ENCODE measurements at regions of chr19 and their contacts with region 1.

Region 1: DNA sequence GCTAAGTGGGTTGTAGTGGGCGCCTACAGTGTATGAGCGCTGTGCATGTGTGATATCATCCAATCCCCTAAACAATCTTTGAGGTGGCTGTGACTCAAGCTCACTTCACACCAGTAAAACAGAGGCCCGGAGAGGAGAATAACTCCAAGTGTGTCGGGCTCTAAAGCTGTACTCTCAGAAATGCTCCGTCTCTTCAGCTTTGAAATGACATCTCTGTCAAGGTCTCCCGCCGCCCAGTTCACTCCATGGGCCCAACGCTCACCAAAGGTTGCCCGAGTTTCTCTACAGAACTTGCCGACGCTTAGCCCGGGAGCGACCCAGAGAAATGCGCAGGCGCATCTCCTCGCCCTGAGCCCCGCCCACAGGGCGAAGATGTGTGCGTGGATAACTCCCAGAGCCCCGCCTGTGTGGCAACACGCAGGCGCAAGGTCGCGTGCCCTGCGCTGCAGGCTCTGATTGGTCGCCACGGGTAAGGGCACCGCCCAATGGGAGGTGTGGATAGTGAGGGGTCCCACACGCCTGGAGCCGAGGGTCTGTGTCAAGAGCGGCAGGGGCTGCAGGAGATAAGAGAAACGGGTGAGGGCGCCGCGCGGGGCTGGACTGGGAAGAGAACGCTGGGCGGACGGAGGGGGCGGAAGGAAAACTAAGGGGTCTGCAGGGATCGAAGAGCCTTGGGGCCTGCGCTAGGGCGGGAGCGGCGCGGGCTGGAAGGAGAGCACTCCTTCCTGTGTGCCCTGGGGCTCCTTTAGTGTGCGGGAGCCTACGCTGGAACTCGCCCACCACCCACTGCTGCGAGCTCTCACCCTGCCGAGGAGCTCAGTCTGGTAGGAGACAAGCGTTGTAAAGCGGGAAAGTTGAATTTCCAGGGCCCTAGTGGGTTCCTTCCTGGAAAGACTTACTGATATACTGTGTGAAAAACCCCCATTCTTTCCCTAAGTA is at the start of gene ZNF526:
- DNase-seq: peak; percentile 96
- H3K4me3 ChIP-seq: peak within 1 kb of the TSS; percentile 80 to 95 (median 85)
- H3K27ac ChIP-seq: peak within 1 kb of the TSS; percentile 65
- H3K4me1 ChIP-seq: peaks cover 27% of the 10 kb centered on the region
- H3K27me3 ChIP-seq: no peaks in the 10 kb centered on the region
- CTCF ChIP-seq: no peak
- total RNA-seq, gene ZNF526: 11.2 to 15.8 TPM

Region 2: GRCh38 chr19:42132851-42133528 is 87.1 kb before region 1 on chr19:
- CTCF ChIA-PET with region 1: no interaction called
- dilution Hi-C with region 1: no loop called
- in situ Hi-C with region 1: no loop called
- intact Hi-C with region 1: no loop called
- DNase-seq: peak; percentile 41
- H3K4me3 ChIP-seq: peak overlapping the region in 1 of 3 experiments; percentile 38
- H3K27ac ChIP-seq: no peak overlapping the region
- H3K4me1 ChIP-seq: peaks cover 33% of the 10 kb centered on the region
- H3K27me3 ChIP-seq: no peaks in the 10 kb centered on the region
- CTCF ChIP-seq: peak; percentile 55 to 94

Region 3: GRCh38 chr19:42199440-42200115 is 20.5 kb before region 1 on chr19:
- CTCF ChIA-PET with region 1: no interaction called
- dilution Hi-C with region 1: no loop called
- in situ Hi-C with region 1: no loop called
- intact Hi-C with region 1: loop called (anchors 2 kb)
- DNase-seq: peak; percentile 80
- H3K4me3 ChIP-seq: no peak overlapping the region
- H3K27ac ChIP-seq: peak overlapping the region; percentile 28
- H3K4me1 ChIP-seq: peaks cover 29% of the 10 kb centered on the region
- H3K27me3 ChIP-seq: no peaks in the 10 kb centered on the region
- CTCF ChIP-seq: peak; percentile 49 to 67

Region 4: DNA sequence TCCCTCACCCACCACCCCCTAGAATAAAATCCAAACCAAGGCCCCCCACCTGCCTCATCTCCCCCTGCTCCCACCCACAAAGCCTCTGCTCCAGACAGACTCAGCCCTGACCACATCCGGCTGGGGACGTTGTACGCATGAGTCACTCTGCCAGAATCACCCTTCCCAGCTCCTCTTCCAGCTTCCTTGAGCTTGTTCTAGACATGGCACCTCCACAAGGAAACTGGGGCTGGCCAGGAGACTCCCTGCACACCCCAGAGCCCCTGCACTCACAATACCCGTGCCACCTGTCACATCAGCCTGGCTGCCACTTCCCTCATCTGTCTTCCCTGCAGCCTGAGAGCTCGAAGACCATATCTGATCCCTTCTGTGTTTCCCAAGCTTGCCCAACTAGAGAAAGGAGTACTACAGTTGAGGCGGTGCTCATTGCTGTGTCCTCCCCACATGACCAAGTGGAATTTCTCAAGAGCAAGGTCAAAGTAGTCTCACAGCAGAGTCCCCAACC is 12.3 kb before region 1 on chr19:
- CTCF ChIA-PET with region 1: no interaction called
- dilution Hi-C with region 1: no loop called
- in situ Hi-C with region 1: no loop called
- intact Hi-C with region 1: loop called (anchors 1 kb)
- DNase-seq: peak; percentile 76
- H3K4me3 ChIP-seq: no peak overlapping the region
- H3K27ac ChIP-seq: peak overlapping the region; percentile 38
- H3K4me1 ChIP-seq: peaks cover 32% of the 10 kb centered on the region
- H3K27me3 ChIP-seq: no peaks in the 10 kb centered on the region
- CTCF ChIP-seq: no peak

Region 5: GRCh38 chr19:42283143-42284065 is 63.3 kb after region 1 on chr19:
- CTCF ChIA-PET with region 1: no interaction called
- dilution Hi-C with region 1: no loop called
- in situ Hi-C with region 1: no loop called
- intact Hi-C with region 1: loop called (anchors 1 kb)
- DNase-seq: peak; percentile 91
- H3K4me3 ChIP-seq: peak overlapping the region in 2 of 3 experiments; percentile 44 to 48
- H3K27ac ChIP-seq: peak overlapping the region; percentile 43
- H3K4me1 ChIP-seq: peaks cover 56% of the 10 kb centered on the region
- H3K27me3 ChIP-seq: no peaks in the 10 kb centered on the region
- CTCF ChIP-seq: no peak

Measured in mammary epithelial cell (primary cell).